K562 (cell line): ENCODE measurements at regions of chr7 and their contacts with region 1.

Region 1: GRCh38 chr7:41940760-41941343 is 238.0 kb upstream of the INHBA start:
- DNase-seq: peak; percentile 60 to 73 (median 73)
- ATAC-seq: peak; percentile 94
- H3K4me3 ChIP-seq: no peak overlapping the region
- H3K27ac ChIP-seq: no peak overlapping the region
- H3K4me1 ChIP-seq: peaks cover 0 to 4% of the 10 kb centered on the region in 2 experiments; a peak in 2 of 5 replicates
- H3K27me3 ChIP-seq: peaks cover 0 to 13% of the 10 kb centered on the region in 2 experiments; a peak in 2 of 5 replicates
- CTCF ChIP-seq: peak; percentile 73 to 84 (median 81)
- EP300 ChIP-seq: no peak
- POLR2A ChIP-seq: no peak
- RAD21 ChIP-seq: peak; percentile 53 to 72

Region 2: GRCh38 chr7:41824284-41824683 is 116.6 kb before region 1 on chr7:
- CTCF ChIA-PET with region 1: no interaction called
- POLR2A ChIA-PET with region 1: no interaction called
- in situ Hi-C with region 1: no loop called
- intact Hi-C with region 1: no loop called
- DNase-seq: no peak
- ATAC-seq: no peak
- H3K4me3 ChIP-seq: no peak overlapping the region
- H3K27ac ChIP-seq: no peak overlapping the region
- H3K4me1 ChIP-seq: no peaks in the 10 kb centered on the region
- H3K27me3 ChIP-seq: no peaks in the 10 kb centered on the region
- CTCF ChIP-seq: no peak
- EP300 ChIP-seq: no peak
- POLR2A ChIP-seq: no peak
- RAD21 ChIP-seq: no peak

Region 3: DNA sequence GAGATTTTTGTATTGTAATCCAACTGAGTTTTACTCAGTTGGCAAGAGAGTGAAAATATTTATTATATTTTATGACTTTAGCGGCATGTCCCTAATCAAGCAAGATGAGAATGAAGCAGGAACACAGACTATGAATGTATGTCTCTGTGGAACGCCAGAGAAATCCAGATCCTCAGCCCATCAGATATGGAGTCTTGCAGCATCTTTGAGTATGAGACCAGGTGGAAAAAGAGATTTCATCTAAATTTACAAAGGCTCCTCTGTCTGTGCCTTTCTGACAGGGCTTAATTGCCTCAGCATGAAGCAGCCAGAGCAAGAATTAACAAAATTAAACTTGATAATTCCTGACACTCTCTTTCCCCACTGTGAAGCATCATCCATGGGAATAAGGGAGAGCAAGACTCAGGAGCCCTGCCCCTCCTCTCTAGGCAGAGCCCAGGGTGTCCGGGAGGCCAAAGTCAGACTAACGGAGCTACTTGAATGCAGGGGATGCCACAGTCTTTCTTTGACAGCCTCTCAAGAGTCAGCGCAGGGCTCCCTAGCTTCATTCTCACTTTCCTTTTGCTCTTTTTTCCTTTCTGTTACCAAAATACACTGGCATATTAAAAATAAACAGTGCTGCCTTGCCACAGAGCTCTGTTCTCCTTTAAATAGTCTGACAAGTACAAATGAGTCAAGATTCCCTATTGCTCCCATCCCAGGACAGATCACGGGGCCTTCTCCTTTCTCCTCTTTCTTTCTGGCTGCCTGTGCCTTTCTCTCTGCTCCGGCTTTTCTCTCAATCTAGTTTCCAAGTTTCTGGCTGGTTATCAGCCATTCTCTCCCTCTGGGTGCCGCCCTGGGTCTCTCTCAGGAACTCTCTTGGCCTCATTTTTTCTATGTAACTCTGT is 105.8 kb before region 1 on chr7:
- CTCF ChIA-PET with region 1: no interaction called
- POLR2A ChIA-PET with region 1: no interaction called
- in situ Hi-C with region 1: no loop called
- intact Hi-C with region 1: no loop called
- DNase-seq: no peak
- ATAC-seq: no peak
- H3K4me3 ChIP-seq: no peak overlapping the region
- H3K27ac ChIP-seq: no peak overlapping the region
- H3K4me1 ChIP-seq: no peaks in the 10 kb centered on the region
- H3K27me3 ChIP-seq: no peaks in the 10 kb centered on the region
- CTCF ChIP-seq: no peak
- EP300 ChIP-seq: no peak
- POLR2A ChIP-seq: no peak
- RAD21 ChIP-seq: no peak

Region 4: DNA sequence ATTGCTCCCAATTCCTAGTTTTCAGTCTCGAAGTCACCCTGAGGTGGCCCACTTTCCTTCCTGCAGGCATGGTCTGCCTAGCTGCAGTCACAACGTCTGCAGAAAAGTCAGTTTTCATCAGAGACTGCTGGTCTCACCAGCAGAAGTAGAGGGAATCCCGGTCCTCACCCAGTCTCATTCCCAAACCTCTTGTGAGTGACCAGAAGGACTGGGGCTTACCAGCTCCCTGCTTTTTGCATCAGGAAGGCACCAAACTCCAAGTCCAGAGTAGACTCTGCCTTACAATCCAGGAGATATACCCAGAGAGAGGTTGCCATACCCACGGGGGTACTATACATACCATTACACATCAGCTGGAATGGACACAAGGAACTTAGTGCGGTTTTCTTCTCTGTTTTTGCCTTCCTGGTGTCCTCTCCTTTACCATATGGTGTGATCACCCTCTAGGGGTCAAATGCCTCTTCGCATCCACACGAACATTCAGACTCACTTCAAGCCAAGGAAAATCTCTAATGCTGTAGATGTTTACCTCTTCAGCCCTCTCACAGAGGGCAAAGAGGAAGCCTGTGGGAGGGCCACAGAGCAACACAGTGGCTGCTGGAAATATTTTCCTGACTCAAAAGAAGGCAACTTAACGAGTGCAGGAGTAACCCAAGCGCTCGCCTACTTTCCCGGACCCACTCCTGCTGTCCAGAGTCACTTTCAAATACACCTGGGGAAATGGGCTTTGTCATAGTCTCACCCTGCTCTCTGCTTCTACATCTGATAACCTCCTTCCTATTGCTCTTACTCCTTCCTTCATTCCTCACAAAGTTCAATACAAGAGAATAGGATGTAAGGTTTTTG is 750.2 kb after region 1 on chr7:
- CTCF ChIA-PET with region 1: no interaction called
- POLR2A ChIA-PET with region 1: no interaction called
- in situ Hi-C with region 1: no loop called
- intact Hi-C with region 1: loop called (anchors 2 kb)
- DNase-seq: peak in 2 of 4 experiments; percentile 12 to 19
- ATAC-seq: peak; percentile 84
- H3K4me3 ChIP-seq: no peak overlapping the region
- H3K27ac ChIP-seq: no peak overlapping the region
- H3K4me1 ChIP-seq: no peaks in the 10 kb centered on the region
- H3K27me3 ChIP-seq: peaks cover 0 to 10% of the 10 kb centered on the region in 2 experiments; a peak in 2 of 5 replicates
- CTCF ChIP-seq: peak; percentile 31 to 55 (median 47); a peak in 4 of 6 replicates
- EP300 ChIP-seq: no peak
- POLR2A ChIP-seq: no peak
- RAD21 ChIP-seq: peak; percentile 40 to 53; a peak in 3 of 4 replicates

Region 5: DNA sequence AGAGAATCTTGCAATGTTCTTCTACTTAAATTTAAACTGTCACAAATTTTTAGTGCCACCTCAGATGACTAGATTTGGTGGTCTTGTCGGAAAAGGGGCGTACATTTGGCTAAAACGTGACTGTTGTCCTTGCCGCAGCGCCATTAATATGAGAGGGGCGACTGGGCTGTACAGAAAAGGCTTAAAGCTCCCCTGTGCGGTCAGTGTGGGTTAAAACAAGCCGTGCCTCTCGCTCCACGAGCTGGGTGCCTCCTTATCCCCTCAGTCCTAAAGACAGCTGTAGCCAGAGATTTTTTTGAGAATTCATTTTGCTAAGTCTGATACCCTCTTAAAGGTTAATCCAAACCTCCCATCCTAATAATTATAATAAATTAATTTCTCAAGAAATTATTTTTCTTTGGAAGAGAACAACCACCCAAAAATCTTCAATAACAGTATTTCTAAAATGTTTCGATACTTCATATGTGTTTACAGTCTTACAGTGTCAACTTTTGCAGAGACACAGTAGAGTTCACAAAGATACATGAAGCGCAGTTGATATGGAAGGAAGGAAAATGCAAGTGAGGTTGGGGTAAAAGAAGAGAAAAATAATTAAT is 902.5 kb after region 1 on chr7:
- CTCF ChIA-PET with region 1: interaction called, 3 read pairs
- POLR2A ChIA-PET with region 1: no interaction called
- in situ Hi-C with region 1: loop called (anchors 25 kb)
- intact Hi-C with region 1: loop called (anchors 5 kb)
- DNase-seq: peak; percentile 22 to 69 (median 44)
- ATAC-seq: peak; percentile 100
- H3K4me3 ChIP-seq: no peak overlapping the region
- H3K27ac ChIP-seq: no peak overlapping the region
- H3K4me1 ChIP-seq: no peaks in the 10 kb centered on the region
- H3K27me3 ChIP-seq: peaks cover 0 to 9% of the 10 kb centered on the region in 2 experiments; a peak in 1 of 5 replicates
- CTCF ChIP-seq: peak; percentile 72 to 81 (median 75)
- EP300 ChIP-seq: no peak
- POLR2A ChIP-seq: no peak
- RAD21 ChIP-seq: peak; percentile 74 to 79

Region 6: DNA sequence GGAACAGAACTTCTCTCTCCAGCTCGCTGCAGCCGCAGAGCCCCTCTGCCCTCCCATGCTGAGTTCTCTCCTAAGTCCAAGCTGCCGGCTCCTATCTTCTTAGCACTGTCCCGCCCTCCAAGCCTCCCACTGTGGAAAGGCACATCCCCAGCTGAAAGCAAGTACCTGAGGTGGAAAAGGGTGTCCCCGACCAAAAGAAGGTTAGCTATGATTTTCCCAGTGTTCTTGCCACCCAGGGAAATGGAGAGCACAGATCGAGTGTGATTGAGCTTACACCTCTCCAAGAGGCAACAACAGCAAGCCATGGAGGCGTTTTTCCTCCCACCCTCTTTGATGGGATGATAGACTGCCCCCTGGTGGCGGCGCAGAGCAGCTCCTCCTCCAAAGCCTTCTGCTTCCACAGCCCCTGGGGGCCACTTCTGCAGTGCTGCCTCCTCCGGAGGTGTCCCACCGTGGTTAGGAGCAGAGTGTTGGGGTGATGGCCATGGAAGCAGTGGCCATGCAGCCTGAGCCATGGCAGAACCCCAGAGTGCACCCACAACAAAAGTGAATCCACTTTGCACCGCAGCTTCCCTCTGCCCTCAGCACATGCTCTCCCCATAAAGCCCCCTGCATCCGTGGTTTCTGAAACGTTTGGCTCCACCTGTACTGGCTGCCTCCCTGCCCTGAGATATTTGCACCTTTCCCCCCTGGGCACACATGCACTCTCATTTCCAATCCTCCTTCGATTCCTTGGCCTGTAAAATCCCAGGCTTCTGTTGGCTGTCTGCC is 1499.0 kb after region 1 on chr7:
- CTCF ChIA-PET with region 1: no interaction called
- POLR2A ChIA-PET with region 1: no interaction called
- in situ Hi-C with region 1: no loop called
- intact Hi-C with region 1: loop called (anchors 10 kb)
- DNase-seq: peak; percentile 70 to 82 (median 80)
- ATAC-seq: peak; percentile 98
- H3K4me3 ChIP-seq: no peak overlapping the region
- H3K27ac ChIP-seq: no peak overlapping the region
- H3K4me1 ChIP-seq: peaks cover 0 to 8% of the 10 kb centered on the region in 2 experiments; a peak in 1 of 5 replicates
- H3K27me3 ChIP-seq: peaks cover 19 to 20% of the 10 kb centered on the region in 2 experiments
- CTCF ChIP-seq: peak; percentile 89 to 94 (median 90)
- EP300 ChIP-seq: no peak
- POLR2A ChIP-seq: no peak
- RAD21 ChIP-seq: peak; percentile 51 to 81